ENCODE measurements at regions of chr3 and their contacts with region 1.

Region 1: GRCh38 chr3:186097663-186098451 is 11.0 kb downstream of the ETV5 start:
- DNase-seq: peak; percentile 64 to 94 (median 83)
- H3K4me3 ChIP-seq: peak overlapping the region in 58 of 59 donors; percentile 12 to 66 (median 45)
- H3K27ac ChIP-seq: peak overlapping the region in 56 of 59 donors; percentile 14 to 88 (median 72)
- H3K27me3 ChIP-seq: no peaks in the 10 kb centered on the region
- CTCF ChIP-seq: peak in 19 of 56 donors; percentile 2 to 38 (median 27)

Region 2: DNA sequence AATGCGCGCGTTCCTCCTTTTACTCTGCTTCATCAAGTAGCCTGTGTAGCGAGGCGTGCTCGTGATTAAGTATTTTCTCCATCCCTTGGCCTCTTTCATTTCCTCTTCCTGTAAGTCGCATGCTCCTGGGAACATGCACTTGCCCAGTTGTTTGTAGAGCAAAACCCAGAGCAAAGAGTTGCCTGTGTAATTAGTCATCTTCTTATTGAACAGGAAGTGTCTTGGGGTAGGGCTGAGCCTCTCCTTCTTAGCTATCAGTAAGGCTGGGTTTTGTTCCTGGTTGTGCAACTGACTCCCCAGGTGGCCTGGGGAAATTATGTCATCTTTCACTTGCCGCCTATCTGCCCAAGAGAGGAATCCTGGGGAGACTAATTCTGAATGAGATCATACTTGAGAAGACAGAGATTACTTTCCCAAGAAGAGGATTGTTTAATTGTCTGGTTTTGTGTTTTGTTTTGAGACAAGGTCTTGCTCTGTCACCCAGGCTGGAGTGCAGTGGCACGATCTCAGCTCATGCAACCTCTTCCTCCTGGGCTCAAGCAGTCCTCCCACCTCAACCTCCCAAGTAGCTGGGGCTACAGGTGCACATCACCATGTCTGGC is 560.4 kb before region 1 on chr3:
- intact Hi-C with region 1: no loop called
- DNase-seq: no peak
- H3K4me3 ChIP-seq: no peak overlapping the region
- H3K27ac ChIP-seq: peak overlapping the region in 2 of 59 donors; percentile 19 to 57
- H3K27me3 ChIP-seq: peaks cover 0 to 3% (median 0%) of the 10 kb centered on the region in 45 donors
- CTCF ChIP-seq: no peak

Region 3: GRCh38 chr3:185937689-185938463 is 160.0 kb before region 1 on chr3 and contains the start of gene TRA2B:
- intact Hi-C with region 1: loop called in 1 of 2 experiments (anchors 5 kb)
- DNase-seq: peak; percentile 98 to 100 (median 99)
- H3K4me3 ChIP-seq: peak within 1 kb of the TSS; percentile 43 to 100 (median 97)
- H3K27ac ChIP-seq: peak within 1 kb of the TSS; percentile 86 to 100 (median 99)
- H3K27me3 ChIP-seq: no peaks in the 10 kb centered on the region
- CTCF ChIP-seq: peak in 52 of 56 donors; percentile 2 to 65 (median 44)
- total RNA-seq, gene TRA2B: 66.0 to 127 (median 89.1) TPM

Region 4: DNA sequence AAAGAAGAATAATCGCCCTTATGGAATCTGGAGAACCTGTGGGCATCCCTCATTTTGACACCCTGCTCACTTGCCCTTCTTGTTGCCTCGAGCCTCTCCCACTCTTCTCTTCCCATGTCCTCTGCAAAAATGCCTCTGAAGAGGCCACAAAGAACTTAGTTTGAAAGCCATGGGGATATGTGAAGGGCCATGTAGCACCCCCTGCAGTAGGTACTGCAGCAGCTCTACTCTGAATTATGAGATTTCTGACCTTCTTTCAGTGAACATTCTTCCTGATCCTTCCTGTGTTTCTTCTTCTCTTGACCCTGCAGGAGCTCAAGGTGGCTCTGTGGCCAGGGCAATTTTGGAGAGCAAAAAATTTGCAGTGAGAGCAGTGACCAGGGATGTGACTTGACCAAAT is 129.7 kb before region 1 on chr3:
- intact Hi-C with region 1: no loop called
- DNase-seq: no peak
- H3K4me3 ChIP-seq: no peak overlapping the region
- H3K27ac ChIP-seq: no peak overlapping the region
- H3K27me3 ChIP-seq: no peaks in the 10 kb centered on the region
- CTCF ChIP-seq: no peak

Region 5: GRCh38 chr3:186044973-186045372 is 52.9 kb before region 1 on chr3:
- intact Hi-C with region 1: loop called (anchors 2 to 5 kb)
- DNase-seq: peak in 9 of 10 donors; percentile 44 to 84 (median 70)
- H3K4me3 ChIP-seq: peak overlapping the region in 52 of 59 donors; percentile 3 to 60 (median 35)
- H3K27ac ChIP-seq: peak overlapping the region in 56 of 59 donors; percentile 0 to 93 (median 82)
- H3K27me3 ChIP-seq: no peaks in the 10 kb centered on the region
- CTCF ChIP-seq: peak in 30 of 56 donors; percentile 10 to 55 (median 30)

Region 6: GRCh38 chr3:186108941-186109865 is 11.3 kb after region 1 on chr3 and contains the start of gene ETV5:
- intact Hi-C with region 1: loop called in 1 of 2 experiments (anchors 1 kb)
- DNase-seq: peak; percentile 99 to 100 (median 100)
- H3K4me3 ChIP-seq: peak within 1 kb of the TSS; percentile 66 to 96 (median 83)
- H3K27ac ChIP-seq: peak within 1 kb of the TSS in 57 of 59 donors; percentile 11 to 93 (median 81)
- H3K27me3 ChIP-seq: peaks cover 0 to 2% (median 0%) of the 10 kb centered on the region in 45 donors
- CTCF ChIP-seq: peak in 17 of 56 donors; percentile 1 to 41 (median 17)
- total RNA-seq, gene ETV5: 21.0 to 97.9 (median 44.5) TPM

Region 7: GRCh38 chr3:186200726-186201125 is 102.9 kb after region 1 on chr3:
- intact Hi-C with region 1: loop called in 1 of 2 experiments (anchors 1 kb)
- DNase-seq: peak; percentile 20 to 87 (median 83)
- H3K4me3 ChIP-seq: peak overlapping the region in 15 of 59 donors; percentile 4 to 32 (median 17)
- H3K27ac ChIP-seq: peak overlapping the region in 47 of 59 donors; percentile 3 to 82 (median 59)
- H3K27me3 ChIP-seq: no peaks in the 10 kb centered on the region
- CTCF ChIP-seq: peak in 1 of 56 donors; percentile 17

Region 8: GRCh38 chr3:186217820-186218164 is 119.9 kb after region 1 on chr3:
- intact Hi-C with region 1: loop called in 1 of 2 experiments (anchors 5 kb)
- DNase-seq: no peak
- H3K4me3 ChIP-seq: no peak overlapping the region
- H3K27ac ChIP-seq: peak overlapping the region in 33 of 59 donors; percentile 1 to 70 (median 41)
- H3K27me3 ChIP-seq: no peaks in the 10 kb centered on the region
- CTCF ChIP-seq: no peak